ENCODE measurements at regions of chr4 and their contacts with region 1.

Region 1: DNA sequence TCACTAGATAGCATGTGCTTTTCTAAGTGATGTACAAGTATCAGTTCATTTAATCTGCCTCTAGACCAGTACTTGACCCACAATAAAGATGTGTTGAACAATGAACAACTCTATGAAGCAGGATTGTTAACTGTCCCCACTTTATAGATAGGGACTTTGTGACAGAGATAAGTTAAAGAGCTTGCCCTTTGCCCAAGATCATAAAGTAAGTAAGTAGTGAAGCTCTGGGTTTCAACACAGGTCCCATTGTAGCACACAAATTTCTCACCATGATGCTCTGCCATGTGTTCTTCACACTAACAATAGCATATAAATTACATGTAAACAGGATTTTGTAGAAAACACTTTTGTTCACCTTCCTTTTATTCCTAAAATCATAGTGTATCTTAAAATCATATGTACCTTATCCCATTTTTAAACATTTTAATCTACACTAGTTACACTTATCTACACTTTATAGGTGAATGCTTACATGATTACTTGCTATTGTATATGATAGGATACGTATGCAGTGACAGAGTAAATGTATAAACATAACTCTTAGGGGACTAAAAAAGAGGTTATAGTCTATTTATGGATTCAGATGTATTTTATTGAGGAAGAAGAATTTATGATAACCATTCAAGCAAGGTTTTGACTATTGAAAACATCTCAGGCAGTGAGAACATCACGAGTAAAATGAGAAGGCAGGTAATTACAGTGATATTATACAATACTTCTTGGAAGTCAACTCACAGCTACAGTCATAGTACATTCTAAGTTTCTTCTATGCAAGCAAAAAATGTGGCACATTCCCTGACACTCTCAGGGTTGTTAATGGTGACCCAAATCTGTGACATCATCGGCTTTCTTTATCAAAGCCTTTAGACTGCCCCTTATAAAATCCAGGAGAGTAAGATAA is 2275.1 kb downstream of the PCDH7 start:
- DNase-seq: no peak
- H3K4me3 Mint-ChIP-seq: no peak overlapping the region
- H3K27ac Mint-ChIP-seq: no peak overlapping the region
- H3K4me1 Mint-ChIP-seq: no peaks in the 10 kb centered on the region
- H3K27me3 Mint-ChIP-seq: no peaks in the 10 kb centered on the region

Region 2: GRCh38 chr4:33052241-33052640 is 57.0 kb after region 1 on chr4:
- intact Hi-C with region 1: loop called (anchors 5 kb)
- DNase-seq: no peak
- H3K4me3 Mint-ChIP-seq: no peak overlapping the region
- H3K27ac Mint-ChIP-seq: no peak overlapping the region
- H3K4me1 Mint-ChIP-seq: no peaks in the 10 kb centered on the region
- H3K27me3 Mint-ChIP-seq: no peaks in the 10 kb centered on the region

Measured in activated CD4-positive, alpha-beta T cell treated with anti-CD3 and anti-CD28 coated beads, Interleukin-2, amount 10 ng/mL, durations not matched to agents 24 days and 14 days (primary cell).